ENCODE measurements at regions of chr1 and their contacts with region 1.

Region 1: GRCh38 chr1:210940081-210940617 is 193.8 kb downstream of the KCNH1 start:
- DNase-seq: no peak
- H3K4me3 ChIP-seq: no peak overlapping the region
- H3K27ac ChIP-seq: no peak overlapping the region
- H3K4me1 ChIP-seq: no peaks in the 10 kb centered on the region; a peak in 1 of 7 replicates
- H3K27me3 ChIP-seq: no peaks in the 10 kb centered on the region
- CTCF ChIP-seq: no peak
- EP300 ChIP-seq: no peak
- POLR2A ChIP-seq: no peak
- RAD21 ChIP-seq: no peak

Region 2: GRCh38 chr1:210883821-210884220 is 56.3 kb before region 1 on chr1:
- CTCF ChIA-PET with region 1: no interaction called
- POLR2A ChIA-PET with region 1: no interaction called
- DNase-seq: no peak
- H3K4me3 ChIP-seq: no peak overlapping the region
- H3K27ac ChIP-seq: no peak overlapping the region
- H3K4me1 ChIP-seq: no peaks in the 10 kb centered on the region
- H3K27me3 ChIP-seq: no peaks in the 10 kb centered on the region
- CTCF ChIP-seq: no peak
- EP300 ChIP-seq: no peak
- POLR2A ChIP-seq: no peak
- RAD21 ChIP-seq: no peak

Region 3: DNA sequence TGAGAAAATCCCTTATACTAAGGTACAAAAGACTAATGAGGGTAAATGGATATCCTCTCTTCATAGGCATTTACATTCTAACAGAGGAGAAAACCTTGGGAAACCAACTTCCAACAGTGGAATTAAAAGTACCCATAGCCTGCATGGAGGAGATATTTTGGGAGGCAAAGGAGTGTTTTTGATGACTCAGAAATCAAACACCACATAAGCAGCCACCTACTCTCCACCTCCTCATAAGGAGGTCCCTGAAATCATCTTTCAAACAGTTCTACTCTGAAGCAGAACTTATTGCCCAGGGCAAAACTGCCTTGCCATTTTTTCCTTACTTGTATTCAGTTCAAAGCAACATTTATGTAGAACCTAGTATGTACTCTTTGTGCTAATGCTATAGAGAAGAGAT is 17.5 kb before region 1 on chr1:
- CTCF ChIA-PET with region 1: no interaction called
- POLR2A ChIA-PET with region 1: no interaction called
- DNase-seq: no peak
- H3K4me3 ChIP-seq: no peak overlapping the region
- H3K27ac ChIP-seq: no peak overlapping the region
- H3K4me1 ChIP-seq: peaks cover 0 to 3% (median 0%) of the 10 kb centered on the region in 4 experiments; a peak in 2 of 7 replicates
- H3K27me3 ChIP-seq: no peaks in the 10 kb centered on the region
- CTCF ChIP-seq: no peak
- EP300 ChIP-seq: no peak
- POLR2A ChIP-seq: no peak
- RAD21 ChIP-seq: no peak

Region 4: DNA sequence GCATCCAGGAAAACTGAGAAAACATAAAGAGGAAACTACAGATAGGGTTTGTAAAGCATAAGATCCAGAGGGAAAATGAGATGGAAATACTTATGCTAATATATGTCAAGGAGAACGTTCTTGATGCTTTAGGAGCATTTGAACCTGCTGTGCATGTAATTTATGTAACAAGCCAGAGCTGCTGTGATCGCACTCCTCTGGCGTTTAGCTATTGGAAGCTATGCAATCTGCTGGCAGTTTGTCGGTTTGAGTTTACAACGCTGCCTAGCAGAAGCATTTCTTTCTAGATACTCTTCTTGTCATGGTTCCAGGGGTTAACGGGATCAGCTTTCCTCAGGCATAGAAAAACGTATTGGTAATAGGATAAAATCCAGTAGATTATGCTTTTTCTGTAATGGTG is 11.1 kb after region 1 on chr1:
- CTCF ChIA-PET with region 1: interaction called, 11 read pairs
- POLR2A ChIA-PET with region 1: no interaction called
- DNase-seq: no peak
- H3K4me3 ChIP-seq: no peak overlapping the region
- H3K27ac ChIP-seq: no peak overlapping the region
- H3K4me1 ChIP-seq: no peaks in the 10 kb centered on the region
- H3K27me3 ChIP-seq: no peaks in the 10 kb centered on the region
- CTCF ChIP-seq: no peak
- EP300 ChIP-seq: no peak
- POLR2A ChIP-seq: no peak
- RAD21 ChIP-seq: no peak